ENCODE measurements at regions of chr1 and their contacts with region 1.

Region 1: GRCh38 chr1:168535536-168535935 is 8.3 kb downstream of the XCL2 start:
- DNase-seq: peak in 7 of 9 donors; percentile 40 to 66 (median 56)
- ATAC-seq: peak; percentile 89
- H3K4me3 ChIP-seq: peak overlapping the region; percentile 5
- H3K4me3 Mint-ChIP-seq: peak overlapping the region; percentile 60 to 86 (median 76)
- H3K27ac ChIP-seq: peak overlapping the region; percentile 43
- H3K27ac Mint-ChIP-seq: peak overlapping the region; percentile 83 to 96 (median 89)
- H3K4me1 ChIP-seq: peaks cover 55 to 59% of the 10 kb centered on the region in 2 donors
- H3K4me1 Mint-ChIP-seq: peaks cover 59 to 93% (median 86%) of the 10 kb centered on the region in 7 donors
- H3K27me3 ChIP-seq: no peaks in the 10 kb centered on the region
- H3K27me3 Mint-ChIP-seq: no peaks in the 10 kb centered on the region

Region 2: DNA sequence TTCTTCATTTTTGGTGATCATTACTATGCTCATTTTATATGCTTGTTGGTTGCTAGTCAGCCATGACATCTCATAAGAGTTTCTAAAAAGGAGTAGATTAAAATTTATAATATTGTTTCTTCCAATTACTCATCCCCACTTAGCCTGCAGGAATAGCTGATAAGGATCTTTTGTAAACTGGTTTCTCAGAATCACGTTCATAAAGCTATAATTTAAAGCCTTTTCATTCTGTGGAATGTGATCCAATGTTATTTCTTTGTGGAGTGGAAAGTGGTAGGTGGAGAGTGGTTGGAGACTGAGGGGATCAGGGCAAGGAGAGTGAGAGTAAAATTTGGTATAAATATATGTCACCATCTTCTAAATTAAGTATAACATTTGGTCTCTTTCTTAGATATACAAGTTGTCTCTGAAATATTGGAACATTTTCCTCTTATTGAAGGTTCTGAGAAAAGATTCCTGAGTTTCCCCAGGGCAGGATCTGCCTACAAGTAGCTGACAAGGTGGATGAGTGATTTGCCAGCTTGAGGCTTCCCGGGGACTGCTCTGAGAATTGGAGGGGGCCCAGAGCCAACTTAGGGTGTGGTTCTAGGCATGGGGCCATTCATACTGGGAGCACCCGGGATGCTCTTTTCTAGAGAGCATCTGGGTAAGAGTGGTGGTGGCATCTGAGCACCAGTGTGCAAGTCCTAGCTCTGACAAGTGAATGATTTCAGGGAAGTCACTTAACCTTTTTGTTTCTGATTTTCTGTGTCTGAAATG is 138.4 kb before region 1 on chr1:
- CTCF ChIA-PET with region 1: no interaction called
- POLR2A ChIA-PET with region 1: no interaction called
- intact Hi-C with region 1: no loop called
- DNase-seq: no peak
- ATAC-seq: no peak
- H3K4me3 ChIP-seq: no peak overlapping the region
- H3K4me3 Mint-ChIP-seq: no peak overlapping the region
- H3K27ac ChIP-seq: no peak overlapping the region
- H3K27ac Mint-ChIP-seq: no peak overlapping the region
- H3K4me1 ChIP-seq: peaks cover 0 to 11% of the 10 kb centered on the region in 2 donors
- H3K4me1 Mint-ChIP-seq: peaks cover 0 to 28% (median 0%) of the 10 kb centered on the region in 7 donors
- H3K27me3 ChIP-seq: no peaks in the 10 kb centered on the region
- H3K27me3 Mint-ChIP-seq: peaks cover 5 to 32% (median 10%) of the 10 kb centered on the region in 5 donors

Region 3: DNA sequence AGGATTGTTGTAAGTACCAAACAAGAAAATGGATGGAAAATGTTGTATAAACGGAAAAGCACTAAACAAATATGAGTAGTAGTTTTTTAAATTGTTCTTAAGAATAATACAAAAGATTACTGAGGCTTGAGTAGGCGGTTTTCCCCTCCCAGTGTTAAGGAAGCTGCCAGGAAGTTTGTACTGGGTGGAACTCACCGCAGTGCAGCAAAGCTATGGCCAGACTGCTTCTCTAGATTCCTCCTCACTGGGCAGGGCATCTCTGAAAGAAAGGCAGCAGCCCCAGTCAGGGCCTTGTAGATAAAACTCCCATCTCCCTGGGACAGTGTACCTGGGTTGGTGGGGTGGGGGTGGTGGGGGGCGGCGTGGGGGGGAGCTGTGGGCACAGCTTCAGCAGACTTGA is 50.5 kb before region 1 on chr1:
- CTCF ChIA-PET with region 1: no interaction called
- POLR2A ChIA-PET with region 1: interaction called, 3 read pairs
- intact Hi-C with region 1: loop called in 1 of 2 experiments (anchors 2 kb)
- DNase-seq: peak in 2 of 9 donors; percentile 12 to 17
- ATAC-seq: peak; percentile 67
- H3K4me3 ChIP-seq: no peak overlapping the region
- H3K4me3 Mint-ChIP-seq: peak overlapping the region; percentile 43 to 77 (median 64)
- H3K27ac ChIP-seq: no peak overlapping the region
- H3K27ac Mint-ChIP-seq: peak overlapping the region in 8 of 9 donors; percentile 75 to 88 (median 80)
- H3K4me1 ChIP-seq: peaks cover 15 to 20% of the 10 kb centered on the region in 2 donors
- H3K4me1 Mint-ChIP-seq: peaks cover 33 to 73% (median 62%) of the 10 kb centered on the region in 7 donors
- H3K27me3 ChIP-seq: no peaks in the 10 kb centered on the region
- H3K27me3 Mint-ChIP-seq: no peaks in the 10 kb centered on the region

Region 4: GRCh38 chr1:168509875-168510791 is 25.4 kb before region 1 on chr1:
- CTCF ChIA-PET with region 1: interaction called, 4 read pairs
- POLR2A ChIA-PET with region 1: interaction called, 8 read pairs
- intact Hi-C with region 1: loop called (anchors 1 to 2 kb)
- DNase-seq: no peak
- ATAC-seq: peak; percentile 64
- H3K4me3 ChIP-seq: no peak overlapping the region
- H3K4me3 Mint-ChIP-seq: peak overlapping the region in 1 of 10 donors; percentile 57
- H3K27ac ChIP-seq: no peak overlapping the region
- H3K27ac Mint-ChIP-seq: peak overlapping the region in 3 of 9 donors; percentile 15 to 77 (median 26)
- H3K4me1 ChIP-seq: peaks cover 27 to 54% of the 10 kb centered on the region in 2 donors
- H3K4me1 Mint-ChIP-seq: peaks cover 42 to 78% (median 46%) of the 10 kb centered on the region in 7 donors
- H3K27me3 ChIP-seq: no peaks in the 10 kb centered on the region
- H3K27me3 Mint-ChIP-seq: no peaks in the 10 kb centered on the region

Region 5: GRCh38 chr1:168555508-168556046 is 20.0 kb after region 1 on chr1:
- CTCF ChIA-PET with region 1: no interaction called
- POLR2A ChIA-PET with region 1: interaction called, 3 read pairs
- intact Hi-C with region 1: loop called in 1 of 2 experiments (anchors 2 kb)
- DNase-seq: no peak
- ATAC-seq: no peak
- H3K4me3 ChIP-seq: no peak overlapping the region
- H3K4me3 Mint-ChIP-seq: no peak overlapping the region
- H3K27ac ChIP-seq: no peak overlapping the region
- H3K27ac Mint-ChIP-seq: no peak overlapping the region
- H3K4me1 ChIP-seq: peaks cover 5 to 38% of the 10 kb centered on the region in 2 donors
- H3K4me1 Mint-ChIP-seq: peaks cover 5 to 40% (median 19%) of the 10 kb centered on the region in 7 donors
- H3K27me3 ChIP-seq: no peaks in the 10 kb centered on the region
- H3K27me3 Mint-ChIP-seq: peaks cover 0 to 3% (median 0%) of the 10 kb centered on the region in 5 donors

Region 6: GRCh38 chr1:168945870-168946269 is 410.3 kb after region 1 on chr1:
- CTCF ChIA-PET with region 1: no interaction called
- POLR2A ChIA-PET with region 1: no interaction called
- intact Hi-C with region 1: no loop called
- DNase-seq: no peak
- ATAC-seq: no peak
- H3K4me3 ChIP-seq: no peak overlapping the region
- H3K4me3 Mint-ChIP-seq: no peak overlapping the region
- H3K27ac ChIP-seq: no peak overlapping the region
- H3K27ac Mint-ChIP-seq: no peak overlapping the region
- H3K4me1 ChIP-seq: no peaks in the 10 kb centered on the region
- H3K4me1 Mint-ChIP-seq: no peaks in the 10 kb centered on the region
- H3K27me3 ChIP-seq: no peaks in the 10 kb centered on the region
- H3K27me3 Mint-ChIP-seq: peaks cover 0 to 32% (median 19%) of the 10 kb centered on the region in 5 donors

Region 7: GRCh38 chr1:169624122-169624521 is 1088.6 kb after region 1 on chr1:
- CTCF ChIA-PET with region 1: no interaction called
- POLR2A ChIA-PET with region 1: no interaction called
- intact Hi-C with region 1: loop called in 1 of 2 experiments (anchors 10 kb)
- DNase-seq: no peak
- ATAC-seq: no peak
- H3K4me3 ChIP-seq: no peak overlapping the region
- H3K4me3 Mint-ChIP-seq: peak overlapping the region in 7 of 10 donors; percentile 7 to 85 (median 52)
- H3K27ac ChIP-seq: no peak overlapping the region
- H3K27ac Mint-ChIP-seq: peak overlapping the region in 8 of 9 donors; percentile 29 to 86 (median 80)
- H3K4me1 ChIP-seq: peaks cover 7 to 64% of the 10 kb centered on the region in 2 donors
- H3K4me1 Mint-ChIP-seq: peaks cover 42 to 86% (median 76%) of the 10 kb centered on the region in 7 donors
- H3K27me3 ChIP-seq: no peaks in the 10 kb centered on the region
- H3K27me3 Mint-ChIP-seq: no peaks in the 10 kb centered on the region

Region 8: DNA sequence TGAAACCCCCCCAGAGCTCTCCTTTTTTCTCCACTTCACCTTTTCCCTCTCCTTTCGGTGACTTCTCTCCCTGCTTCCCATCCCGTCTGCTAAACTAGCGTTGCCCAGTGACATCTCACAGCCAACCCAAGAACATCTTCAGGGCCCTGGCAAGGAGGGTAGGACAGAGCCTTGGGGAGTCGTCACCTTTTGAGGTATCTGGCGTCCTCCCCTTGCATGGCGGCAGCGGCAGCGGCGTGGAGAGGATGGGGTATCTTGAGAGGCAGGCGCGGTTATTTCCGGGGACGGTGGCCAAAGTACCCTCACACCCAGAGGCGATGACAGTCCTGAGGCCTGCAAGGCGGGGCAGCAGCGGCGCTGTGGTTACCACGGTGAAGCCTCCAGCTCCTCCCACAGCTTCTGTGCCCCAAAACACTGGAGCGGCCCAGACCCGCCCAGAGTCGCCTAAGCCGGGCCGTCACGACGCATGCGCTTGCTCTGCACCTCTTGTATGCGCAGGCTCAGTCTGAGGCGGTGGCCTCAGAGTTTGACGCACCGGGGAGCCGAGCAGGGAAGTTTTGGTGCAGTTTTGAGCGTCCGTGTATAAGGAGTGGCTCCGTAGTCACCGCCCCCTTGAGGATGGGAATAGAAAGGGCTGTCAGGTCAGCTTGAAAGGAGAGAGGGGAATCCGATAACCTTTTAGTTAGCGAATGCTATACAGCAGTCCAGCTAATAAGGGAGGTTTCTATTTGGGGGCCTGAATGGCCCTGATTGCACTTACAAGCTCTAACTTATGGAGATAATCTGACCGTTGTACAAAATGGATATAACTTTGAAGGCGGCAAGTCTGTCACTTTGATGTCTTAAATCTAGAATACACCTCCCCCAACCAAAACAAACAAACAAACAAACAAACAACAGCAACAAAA is 1539.0 kb after region 1 on chr1 and contains the start of gene KIFAP3:
- CTCF ChIA-PET with region 1: no interaction called
- POLR2A ChIA-PET with region 1: no interaction called
- intact Hi-C with region 1: loop called in 1 of 2 experiments (anchors 10 kb)
- DNase-seq: peak; percentile 84 to 94 (median 92)
- ATAC-seq: peak; percentile 96
- H3K4me3 ChIP-seq: peak within 1 kb of the TSS; percentile 76
- H3K4me3 Mint-ChIP-seq: peak within 1 kb of the TSS; percentile 89 to 99 (median 96)
- H3K27ac ChIP-seq: peak within 1 kb of the TSS; percentile 90
- H3K27ac Mint-ChIP-seq: peak within 1 kb of the TSS; percentile 83 to 98 (median 94)
- H3K4me1 ChIP-seq: peaks cover 15 to 37% of the 10 kb centered on the region in 2 donors
- H3K4me1 Mint-ChIP-seq: peaks cover 34 to 65% (median 57%) of the 10 kb centered on the region in 7 donors
- H3K27me3 ChIP-seq: no peaks in the 10 kb centered on the region
- H3K27me3 Mint-ChIP-seq: peaks cover 0 to 3% (median 0%) of the 10 kb centered on the region in 5 donors
- total RNA-seq, gene KIFAP3: 12.8 to 23.8 (median 20.1) TPM